Right ventricle myocardium superior (tissue), 1 donor: ENCODE measurements at regions of chr2 and their contacts with region 1.

Region 1: GRCh38 chr2:46458763-46459500 is 20.4 kb upstream of the TMEM247 start:
- DNase-seq: no peak
- ATAC-seq: no peak

Region 2: DNA sequence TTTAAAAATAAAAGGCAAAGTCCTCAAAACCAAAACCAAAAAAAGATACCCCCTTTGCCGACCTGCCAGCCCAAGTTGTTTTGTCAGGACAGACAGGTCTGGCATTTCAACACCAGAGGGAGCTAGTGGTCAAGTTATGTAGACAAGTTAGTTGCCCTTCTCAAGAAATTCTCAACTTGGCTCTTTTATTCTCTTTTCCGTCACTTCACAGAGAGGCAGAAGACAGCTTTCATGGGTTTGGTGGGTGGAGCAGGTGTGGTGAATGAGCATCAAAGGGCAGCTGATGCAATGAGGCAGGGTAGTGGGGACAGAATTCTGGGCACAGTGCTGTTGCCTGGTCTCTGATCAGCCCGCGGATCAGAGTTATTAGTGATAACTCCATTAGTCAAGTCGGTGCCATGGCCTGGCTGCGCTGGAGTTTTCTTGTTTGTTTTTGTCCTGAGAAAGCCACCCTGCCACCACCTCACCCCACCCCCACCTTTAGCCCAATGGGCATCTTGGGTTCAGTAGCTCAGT is 465.4 kb before region 1 on chr2:
- intact Hi-C with region 1: loop called (anchors 2 kb)
- DNase-seq: no peak
- ATAC-seq: peak; percentile 72

Region 3: GRCh38 chr2:46385786-46386577 is 73.0 kb before region 1 on chr2:
- intact Hi-C with region 1: loop called (anchors 5 kb)
- DNase-seq: no peak
- ATAC-seq: no peak

Region 4: DNA sequence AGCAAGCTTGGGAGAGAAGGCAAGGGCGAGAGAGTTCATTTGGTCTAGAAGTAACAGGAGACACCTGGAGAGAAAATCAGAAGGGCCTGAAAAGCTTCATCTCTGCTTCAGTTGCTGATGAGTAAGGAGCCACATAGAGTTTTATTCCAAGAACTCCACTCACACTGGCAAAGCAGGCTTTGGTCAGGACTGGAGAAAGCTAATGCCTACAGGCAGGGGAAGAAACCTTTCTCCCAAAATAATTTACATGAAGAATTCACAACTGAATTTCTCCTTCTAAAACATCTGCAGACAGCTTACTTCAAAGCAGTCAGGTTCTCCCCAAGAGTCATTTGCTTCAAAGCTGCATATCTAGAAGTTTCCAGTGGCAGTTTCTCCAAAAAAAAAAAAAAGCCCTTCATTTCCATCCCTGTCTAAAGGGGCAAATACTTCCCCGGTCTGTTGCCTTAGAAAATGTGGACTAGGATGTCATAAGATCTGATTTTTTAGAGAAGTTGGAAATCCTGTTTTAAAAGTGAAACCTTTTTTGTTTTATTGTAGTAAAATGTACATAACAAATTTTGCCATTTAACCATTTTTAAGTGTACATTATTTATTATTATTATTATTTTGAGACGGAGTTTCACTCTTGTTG is 66.7 kb after region 1 on chr2:
- intact Hi-C with region 1: no loop called
- DNase-seq: no peak
- ATAC-seq: no peak